CD4-positive, alpha-beta memory T cell (primary cell): ENCODE measurements at regions of chr11 and their contacts with region 1.

Region 1: DNA sequence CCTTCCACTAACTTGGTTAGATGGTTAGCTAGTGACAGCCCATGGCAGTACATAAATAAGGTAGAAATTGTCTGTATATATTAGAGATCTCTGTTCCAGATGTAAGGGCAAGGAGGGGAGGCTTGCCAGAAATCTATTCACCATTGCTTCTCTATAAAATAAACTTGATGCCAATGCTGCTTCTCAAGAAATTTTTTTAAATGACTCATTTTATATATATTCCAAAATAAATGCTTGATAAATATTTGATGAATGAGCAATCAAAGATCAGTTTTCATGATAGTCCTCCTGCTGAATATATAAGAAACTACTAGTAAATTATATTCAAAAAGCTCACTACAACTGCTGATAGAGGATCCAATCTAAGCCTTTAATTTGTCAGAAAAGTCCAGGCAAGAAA is 710.6 kb upstream of the CCDC179 start:
- DNase-seq: no peak
- H3K4me3 ChIP-seq: no peak overlapping the region
- H3K4me3 Mint-ChIP-seq: no peak overlapping the region
- H3K27ac ChIP-seq: no peak overlapping the region
- H3K27ac Mint-ChIP-seq: no peak overlapping the region
- H3K4me1 ChIP-seq: no peaks in the 10 kb centered on the region
- H3K4me1 Mint-ChIP-seq: no peaks in the 10 kb centered on the region
- H3K27me3 ChIP-seq: no peaks in the 10 kb centered on the region
- H3K27me3 Mint-ChIP-seq: no peaks in the 10 kb centered on the region

Region 2: GRCh38 chr11:23543651-23544222 is 27.1 kb before region 1 on chr11:
- CTCF ChIA-PET with region 1: no interaction called
- POLR2A ChIA-PET with region 1: no interaction called
- intact Hi-C with region 1: loop called (anchors 1 kb)
- DNase-seq: no peak
- H3K4me3 ChIP-seq: no peak overlapping the region
- H3K4me3 Mint-ChIP-seq: no peak overlapping the region
- H3K27ac ChIP-seq: no peak overlapping the region
- H3K27ac Mint-ChIP-seq: no peak overlapping the region
- H3K4me1 ChIP-seq: no peaks in the 10 kb centered on the region
- H3K4me1 Mint-ChIP-seq: no peaks in the 10 kb centered on the region
- H3K27me3 ChIP-seq: no peaks in the 10 kb centered on the region
- H3K27me3 Mint-ChIP-seq: no peaks in the 10 kb centered on the region